ENCODE measurements at regions of chr19 and their contacts with region 1.

Region 1: GRCh38 chr19:42440357-42441048 is 2.2 kb downstream of the CXCL17 start:
- DNase-seq: peak; percentile 87
- ATAC-seq: peak; percentile 71
- H3K4me3 Mint-ChIP-seq: no peak overlapping the region
- H3K27ac Mint-ChIP-seq: peak overlapping the region; percentile 23
- H3K4me1 Mint-ChIP-seq: peaks cover 25% of the 10 kb centered on the region
- H3K27me3 Mint-ChIP-seq: peaks cover 3% of the 10 kb centered on the region

Region 2: DNA sequence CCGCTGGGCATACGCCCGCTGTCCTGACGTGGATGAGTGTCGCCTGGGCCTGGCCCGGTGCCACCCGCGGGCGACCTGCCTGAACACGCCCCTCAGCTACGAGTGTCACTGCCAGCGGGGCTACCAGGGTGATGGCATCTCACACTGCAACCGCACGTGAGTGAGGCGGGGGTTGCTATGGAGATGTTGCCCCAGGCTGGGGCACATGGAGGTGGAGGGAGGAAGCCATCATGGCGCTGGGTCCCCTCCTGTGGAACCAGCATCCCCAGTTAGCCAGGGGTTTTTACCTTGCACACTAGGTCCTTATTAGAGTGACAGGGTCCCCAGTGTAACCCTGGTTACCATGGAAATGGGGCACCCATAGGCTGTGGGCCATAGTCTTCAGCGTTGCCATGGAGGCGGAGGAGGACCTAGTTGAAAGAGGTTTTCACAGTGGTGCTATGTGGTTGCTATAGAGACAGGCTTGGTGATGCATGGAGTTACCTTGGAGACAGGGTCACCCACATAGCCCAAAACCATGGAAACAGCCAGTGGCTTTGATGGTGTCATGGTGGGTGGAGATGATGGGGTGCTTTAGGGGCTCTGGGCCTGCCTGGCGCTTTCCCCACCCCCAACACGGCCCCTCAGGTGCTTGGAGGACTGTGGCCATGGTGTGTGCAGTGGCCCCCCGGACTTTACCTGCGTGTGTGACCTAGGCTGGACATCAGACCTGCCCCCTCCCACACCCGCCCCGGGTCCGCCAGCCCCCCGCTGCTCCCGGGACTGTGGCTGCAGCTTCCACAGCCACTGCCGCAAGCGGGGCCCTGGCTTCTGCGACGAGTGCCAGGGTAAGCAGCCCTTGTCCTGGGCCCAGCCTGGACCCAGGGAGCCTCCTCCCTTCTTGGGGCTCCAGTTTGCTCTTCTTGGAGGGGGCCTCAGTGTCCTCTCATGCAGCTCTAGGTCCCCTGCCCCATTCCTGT is 87.9 kb before region 1 on chr19:
- CTCF ChIA-PET with region 1: no interaction called
- POLR2A ChIA-PET with region 1: no interaction called
- DNase-seq: peak; percentile 39
- ATAC-seq: peak; percentile 67
- H3K4me3 Mint-ChIP-seq: no peak overlapping the region
- H3K27ac Mint-ChIP-seq: no peak overlapping the region
- H3K4me1 Mint-ChIP-seq: no peaks in the 10 kb centered on the region
- H3K27me3 Mint-ChIP-seq: no peaks in the 10 kb centered on the region

Region 3: DNA sequence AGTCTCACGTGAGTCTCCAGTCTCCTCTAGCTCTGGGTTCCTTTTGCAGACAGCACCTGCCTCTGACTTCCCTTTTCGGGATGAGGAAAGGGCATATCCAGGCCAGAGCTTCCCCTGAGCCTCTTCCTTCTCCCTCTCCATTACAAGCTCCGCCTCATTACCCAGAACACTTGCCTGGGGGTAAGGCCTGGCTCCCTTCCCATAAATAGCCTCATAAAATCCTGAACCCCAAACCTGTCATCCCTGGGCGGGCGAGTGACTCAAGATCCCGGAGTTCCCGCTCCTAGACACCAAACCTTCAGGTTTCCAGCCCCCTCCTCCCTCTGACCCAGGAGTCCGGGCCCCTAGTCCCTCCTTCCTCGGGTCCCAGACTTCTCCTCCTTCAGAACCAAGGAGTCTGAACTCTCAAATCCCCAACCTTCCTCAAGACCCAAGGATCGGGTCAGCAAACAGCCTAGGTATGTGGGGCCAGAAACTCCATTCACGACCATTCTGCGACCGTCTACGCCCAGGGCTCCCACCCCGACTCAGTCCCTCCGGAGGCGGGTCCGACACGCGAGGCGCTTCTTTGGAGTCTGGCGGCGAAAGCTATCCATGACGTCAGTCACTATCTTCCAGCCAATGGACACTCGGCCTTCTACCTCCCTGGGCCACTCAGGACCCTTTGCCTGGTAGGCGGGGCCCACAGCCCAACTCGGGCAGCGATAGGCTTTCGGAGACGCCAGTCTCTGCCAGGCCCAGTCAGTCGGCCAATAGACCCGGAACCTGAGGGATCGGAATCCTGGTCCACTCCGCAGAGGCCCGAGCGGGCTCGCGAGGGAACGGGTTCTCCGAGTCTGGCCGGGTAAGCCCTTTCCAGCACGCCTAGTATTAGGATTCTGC is 43.9 kb before region 1 on chr19:
- CTCF ChIA-PET with region 1: interaction called, 14 read pairs
- POLR2A ChIA-PET with region 1: no interaction called
- DNase-seq: peak; percentile 98
- ATAC-seq: peak; percentile 99
- H3K4me3 Mint-ChIP-seq: peak overlapping the region; percentile 92
- H3K27ac Mint-ChIP-seq: peak overlapping the region; percentile 91
- H3K4me1 Mint-ChIP-seq: peaks cover 32% of the 10 kb centered on the region
- H3K27me3 Mint-ChIP-seq: peaks cover 7% of the 10 kb centered on the region

Region 4: DNA sequence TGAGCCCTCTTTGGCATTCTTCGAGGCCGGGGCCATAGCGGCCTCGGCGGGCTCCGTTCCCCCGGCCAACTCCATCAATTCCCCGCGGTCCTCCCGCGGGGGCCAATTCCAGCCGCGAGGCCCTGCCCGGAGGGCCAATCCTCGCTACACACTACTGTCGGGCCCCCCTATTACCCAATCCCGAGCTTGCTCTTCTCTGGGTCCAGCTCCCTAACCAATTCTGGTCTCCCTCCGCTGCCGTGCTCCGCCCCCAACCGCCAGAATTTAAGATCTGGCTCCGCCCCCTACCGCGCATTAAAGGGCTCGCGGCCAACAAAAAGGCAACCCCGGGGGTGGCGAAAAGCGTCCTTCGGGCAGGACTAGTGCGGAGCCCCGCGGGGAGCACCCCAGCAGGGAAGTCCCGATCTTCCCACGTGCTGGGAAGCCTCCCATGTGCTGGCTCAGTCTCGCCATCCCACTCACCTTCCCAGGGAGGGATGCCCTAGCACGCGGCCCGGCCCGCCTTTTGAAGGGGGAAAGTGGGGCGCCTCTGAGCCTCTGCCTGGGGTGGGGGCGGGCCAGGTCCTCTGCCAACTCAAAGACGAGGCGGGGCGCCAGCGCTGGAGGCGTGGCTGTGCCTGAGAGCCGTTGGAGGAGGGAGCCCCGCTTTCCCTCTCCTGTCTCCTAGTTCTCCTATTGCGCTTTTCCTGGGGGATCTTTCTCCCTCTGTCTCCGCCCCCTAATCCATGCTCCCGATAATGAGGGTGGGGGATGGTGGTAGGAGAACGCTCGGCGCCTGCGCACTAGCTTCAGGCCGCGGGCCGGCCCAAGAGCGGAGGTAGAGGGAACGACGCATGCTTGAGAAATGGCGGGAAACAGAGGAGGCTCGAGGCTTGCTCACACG is 16.8 kb before region 1 on chr19:
- CTCF ChIA-PET with region 1: interaction called, 43 read pairs
- POLR2A ChIA-PET with region 1: interaction called, 5 read pairs
- DNase-seq: peak; percentile 96
- ATAC-seq: peak; percentile 98
- H3K4me3 Mint-ChIP-seq: peak overlapping the region; percentile 98
- H3K27ac Mint-ChIP-seq: peak overlapping the region; percentile 94
- H3K4me1 Mint-ChIP-seq: peaks cover 45% of the 10 kb centered on the region
- H3K27me3 Mint-ChIP-seq: no peaks in the 10 kb centered on the region

Region 5: GRCh38 chr19:42497492-42498168 is 57.1 kb after region 1 on chr19:
- CTCF ChIA-PET with region 1: interaction called, 12 read pairs
- POLR2A ChIA-PET with region 1: no interaction called
- DNase-seq: no peak
- ATAC-seq: no peak
- H3K4me3 Mint-ChIP-seq: no peak overlapping the region
- H3K27ac Mint-ChIP-seq: peak overlapping the region; percentile 60
- H3K4me1 Mint-ChIP-seq: peaks cover 54% of the 10 kb centered on the region
- H3K27me3 Mint-ChIP-seq: no peaks in the 10 kb centered on the region

Region 6: GRCh38 chr19:42524250-42524649 is 83.7 kb after region 1 on chr19:
- CTCF ChIA-PET with region 1: interaction called, 54 read pairs
- POLR2A ChIA-PET with region 1: interaction called, 3 read pairs
- DNase-seq: no peak
- ATAC-seq: no peak
- H3K4me3 Mint-ChIP-seq: peak overlapping the region; percentile 32
- H3K27ac Mint-ChIP-seq: peak overlapping the region; percentile 53
- H3K4me1 Mint-ChIP-seq: peaks cover 61% of the 10 kb centered on the region
- H3K27me3 Mint-ChIP-seq: no peaks in the 10 kb centered on the region

Region 7: GRCh38 chr19:42540071-42540553 is 99.6 kb after region 1 on chr19:
- CTCF ChIA-PET with region 1: interaction called, 18 read pairs
- POLR2A ChIA-PET with region 1: no interaction called
- DNase-seq: no peak
- ATAC-seq: no peak
- H3K4me3 Mint-ChIP-seq: no peak overlapping the region
- H3K27ac Mint-ChIP-seq: no peak overlapping the region
- H3K4me1 Mint-ChIP-seq: no peaks in the 10 kb centered on the region
- H3K27me3 Mint-ChIP-seq: peaks cover 5% of the 10 kb centered on the region

Measured in activated CD8-positive, alpha-beta T cell treated with anti-CD3 and anti-CD28 coated beads, Interleukin-2, amount 10 ng/mL, durations not matched to agents 7 days and 5 days (primary cell).